ENCODE measurements at regions of chr16 and their contacts with region 1.

Region 1: DNA sequence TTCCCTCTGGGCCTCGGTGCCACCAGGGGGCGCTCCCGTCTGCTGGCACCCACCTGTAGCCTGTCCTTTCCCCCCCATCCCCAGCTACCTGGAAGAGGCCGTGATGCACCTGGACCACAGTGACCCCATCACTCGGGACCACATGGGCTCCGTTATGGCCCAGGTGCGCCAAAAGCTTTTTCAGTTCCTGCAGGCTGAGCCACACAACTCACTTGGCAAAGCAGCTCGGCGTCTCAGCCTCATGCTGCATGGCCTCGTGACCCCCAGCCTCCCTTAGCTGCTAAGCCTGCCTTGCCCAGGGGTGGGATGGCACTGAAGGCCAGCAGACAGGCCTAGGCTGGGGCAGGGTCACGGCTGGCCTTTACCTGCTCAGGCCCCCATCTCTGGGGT is 818 bp upstream of the NRN1L start:
- DNase-seq: peak; percentile 88
- ATAC-seq: peak; percentile 60
- H3K4me3 Mint-ChIP-seq: no peak overlapping the region
- H3K27ac Mint-ChIP-seq: no peak overlapping the region
- H3K4me1 Mint-ChIP-seq: peaks cover 23% of the 10 kb centered on the region
- H3K27me3 Mint-ChIP-seq: no peaks in the 10 kb centered on the region
- CTCF ChIP-seq: peak; percentile 90

Region 2: DNA sequence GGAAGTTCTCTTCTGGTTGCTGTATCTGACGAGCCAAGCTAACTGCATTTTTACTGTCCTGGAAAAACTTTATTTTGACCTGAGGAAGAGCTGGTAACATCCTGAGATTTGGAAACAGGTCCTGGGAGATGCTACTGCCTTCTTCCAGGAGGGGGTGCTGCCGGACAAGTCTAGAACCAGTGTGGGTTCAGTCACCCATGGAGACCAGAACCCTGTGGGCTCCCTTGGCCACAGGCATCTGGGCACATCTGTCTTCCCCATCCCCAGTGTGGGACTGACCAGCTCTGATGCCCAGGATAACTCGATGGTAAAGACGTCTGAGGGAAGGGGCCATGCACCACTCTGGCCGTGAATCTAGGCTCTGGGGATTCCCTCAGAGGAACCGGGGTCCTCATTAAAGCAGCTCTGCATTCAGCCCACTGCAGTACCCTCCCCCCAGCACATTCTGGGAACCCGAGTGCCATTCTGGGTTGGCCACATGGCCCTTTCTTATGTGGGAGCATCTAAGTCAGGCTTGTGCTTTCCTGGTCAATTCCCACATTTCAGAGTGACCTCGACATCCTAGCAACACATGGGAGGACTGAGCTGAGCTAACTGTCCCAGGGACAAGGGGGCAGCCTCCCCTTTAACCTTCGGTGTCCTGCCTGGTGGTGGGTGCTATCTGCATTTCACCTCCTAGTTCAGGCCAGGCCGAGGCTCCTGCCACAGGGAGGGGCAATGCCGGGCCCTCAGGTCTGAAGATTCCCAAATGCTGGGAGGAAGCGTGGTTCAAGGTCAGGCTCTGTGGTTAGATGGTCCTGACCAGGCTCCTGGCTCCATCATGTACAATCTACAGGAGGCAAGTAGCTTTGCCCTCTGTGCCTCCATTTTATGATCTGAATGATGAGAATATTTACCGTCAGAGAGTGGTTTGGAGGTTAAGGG is 210.9 kb before region 1 on chr16:
- CTCF ChIA-PET with region 1: interaction called, 10 read pairs
- POLR2A ChIA-PET with region 1: interaction called, 3 read pairs
- DNase-seq: peak; percentile 79
- ATAC-seq: peak; percentile 62
- H3K4me3 Mint-ChIP-seq: no peak overlapping the region
- H3K27ac Mint-ChIP-seq: peak overlapping the region; percentile 30; the same call in 1 of the 2 replicates
- H3K4me1 Mint-ChIP-seq: no peaks in the 10 kb centered on the region; the same call in 1 of the 2 replicates
- H3K27me3 Mint-ChIP-seq: no peaks in the 10 kb centered on the region
- CTCF ChIP-seq: peak; percentile 62

Region 3: DNA sequence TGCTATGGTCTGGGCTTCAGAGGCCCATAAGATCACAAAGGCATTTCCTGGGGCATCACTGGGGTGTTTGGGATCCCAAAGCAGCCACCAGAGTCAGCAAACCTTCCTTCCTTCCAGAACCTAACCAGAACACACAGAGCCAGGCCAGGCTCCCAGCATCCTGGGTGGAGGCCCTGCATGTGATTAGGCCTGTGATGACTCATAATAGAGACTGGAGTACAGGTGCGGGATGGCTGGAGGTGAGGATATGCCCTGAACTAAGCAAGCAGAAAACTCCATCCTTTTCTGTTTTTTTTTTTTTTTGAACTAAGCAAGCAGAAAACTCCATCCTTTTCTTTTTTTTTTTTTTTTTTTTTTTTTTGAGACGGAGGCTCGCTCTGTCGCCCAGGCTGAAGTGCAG is 147.0 kb before region 1 on chr16:
- CTCF ChIA-PET with region 1: no interaction called
- POLR2A ChIA-PET with region 1: no interaction called
- DNase-seq: no peak
- ATAC-seq: no peak
- H3K4me3 Mint-ChIP-seq: no peak overlapping the region
- H3K27ac Mint-ChIP-seq: no peak overlapping the region
- H3K4me1 Mint-ChIP-seq: no peaks in the 10 kb centered on the region
- H3K27me3 Mint-ChIP-seq: no peaks in the 10 kb centered on the region
- CTCF ChIP-seq: no peak

Region 4: GRCh38 chr16:67857502-67858233 is 26.2 kb before region 1 on chr16:
- CTCF ChIA-PET with region 1: interaction called, 18 read pairs
- POLR2A ChIA-PET with region 1: no interaction called
- DNase-seq: peak; percentile 51
- ATAC-seq: peak; percentile 93
- H3K4me3 Mint-ChIP-seq: peak overlapping the region; percentile 24; the same call in 1 of the 2 replicates
- H3K27ac Mint-ChIP-seq: peak overlapping the region; percentile 85
- H3K4me1 Mint-ChIP-seq: peaks cover 34% of the 10 kb centered on the region
- H3K27me3 Mint-ChIP-seq: no peaks in the 10 kb centered on the region
- CTCF ChIP-seq: no peak

Region 5: GRCh38 chr16:67910158-67910557 is 26.3 kb after region 1 on chr16:
- CTCF ChIA-PET with region 1: interaction called, 24 read pairs
- POLR2A ChIA-PET with region 1: interaction called, 4 read pairs
- DNase-seq: no peak
- ATAC-seq: no peak
- H3K4me3 Mint-ChIP-seq: no peak overlapping the region
- H3K27ac Mint-ChIP-seq: peak overlapping the region; percentile 78; the same call in 1 of the 2 replicates
- H3K4me1 Mint-ChIP-seq: peaks cover 13% of the 10 kb centered on the region
- H3K27me3 Mint-ChIP-seq: no peaks in the 10 kb centered on the region
- CTCF ChIP-seq: no peak

Region 6: DNA sequence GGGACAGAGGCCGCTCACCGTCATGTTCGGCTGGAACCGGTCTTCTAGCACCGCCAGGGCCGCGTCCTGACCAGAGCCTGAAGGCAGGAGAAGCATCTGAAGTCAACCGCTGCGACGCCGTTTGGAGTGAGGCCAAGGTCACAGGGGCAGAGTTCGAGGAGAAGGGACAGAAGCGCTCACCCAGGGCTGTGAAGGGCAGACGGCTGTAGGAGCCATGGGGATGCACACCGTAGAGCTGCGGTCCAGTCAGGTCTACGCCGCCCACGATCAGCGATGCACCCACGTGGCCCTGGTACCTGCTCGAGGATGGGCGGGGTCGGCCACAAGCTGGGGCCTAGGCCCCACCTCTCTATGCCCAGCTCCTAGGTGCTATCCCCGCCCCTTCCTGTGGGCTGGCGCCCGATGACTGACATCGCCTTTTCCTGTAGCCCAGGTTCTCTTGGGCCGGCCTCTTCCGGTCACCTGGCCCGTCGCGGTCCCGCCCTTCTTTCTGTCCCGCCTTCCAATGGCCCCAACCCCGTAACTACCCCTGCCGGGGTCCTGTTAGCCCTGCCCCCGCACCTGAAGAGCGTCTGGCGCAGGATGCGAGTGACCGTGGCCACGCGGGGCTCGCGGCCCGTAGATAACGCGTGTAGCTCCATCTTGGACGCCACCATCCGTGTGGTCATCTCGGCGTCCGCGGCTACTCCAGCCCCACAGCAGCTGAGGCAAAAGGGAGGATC is 51.7 kb after region 1 on chr16:
- CTCF ChIA-PET with region 1: interaction called, 144 read pairs
- POLR2A ChIA-PET with region 1: interaction called, 30 read pairs
- DNase-seq: peak; percentile 98
- ATAC-seq: peak; percentile 92
- H3K4me3 Mint-ChIP-seq: peak overlapping the region; percentile 100
- H3K27ac Mint-ChIP-seq: peak overlapping the region; percentile 100
- H3K4me1 Mint-ChIP-seq: peaks cover 23% of the 10 kb centered on the region
- H3K27me3 Mint-ChIP-seq: no peaks in the 10 kb centered on the region
- CTCF ChIP-seq: no peak

Region 7: GRCh38 chr16:68085259-68086071 is 201.6 kb after region 1 on chr16 and contains the start of gene NFATC3:
- CTCF ChIA-PET with region 1: interaction called, 14 read pairs
- POLR2A ChIA-PET with region 1: interaction called, 3 read pairs
- DNase-seq: peak; percentile 98
- ATAC-seq: peak; percentile 65
- H3K4me3 Mint-ChIP-seq: peak within 1 kb of the TSS; percentile 97
- H3K27ac Mint-ChIP-seq: peak within 1 kb of the TSS; percentile 78
- H3K4me1 Mint-ChIP-seq: peaks cover 20% of the 10 kb centered on the region
- H3K27me3 Mint-ChIP-seq: no peaks in the 10 kb centered on the region
- CTCF ChIP-seq: no peak
- total RNA-seq, gene NFATC3: 32.5 to 34.6 TPM (median 33.3 TPM) in 3 replicates